ENCODE measurements at regions of chr1 and their contacts with region 1.

Region 1: GRCh38 chr1:212782422-212783154 is 9.0 kb downstream of the NSL1 start:
- DNase-seq: peak; percentile 7
- H3K4me3 ChIP-seq: no peak overlapping the region
- H3K27ac ChIP-seq: no peak overlapping the region
- H3K4me1 ChIP-seq: no peaks in the 10 kb centered on the region
- H3K27me3 ChIP-seq: no peaks in the 10 kb centered on the region
- CTCF ChIP-seq: peak; percentile 52 to 57

Region 2: GRCh38 chr1:212699104-212699624 is 83.4 kb before region 1 on chr1:
- CTCF ChIA-PET with region 1: no interaction called
- dilution Hi-C with region 1: no loop called
- in situ Hi-C with region 1: no loop called
- intact Hi-C with region 1: loop called (anchors 2 kb)
- DNase-seq: no peak
- H3K4me3 ChIP-seq: peak overlapping the region; percentile 33 to 53 (median 52)
- H3K27ac ChIP-seq: no peak overlapping the region
- H3K4me1 ChIP-seq: peaks cover 20% of the 10 kb centered on the region
- H3K27me3 ChIP-seq: peaks cover 28% of the 10 kb centered on the region
- CTCF ChIP-seq: peak in 1 of 2 donors; percentile 52

Region 3: DNA sequence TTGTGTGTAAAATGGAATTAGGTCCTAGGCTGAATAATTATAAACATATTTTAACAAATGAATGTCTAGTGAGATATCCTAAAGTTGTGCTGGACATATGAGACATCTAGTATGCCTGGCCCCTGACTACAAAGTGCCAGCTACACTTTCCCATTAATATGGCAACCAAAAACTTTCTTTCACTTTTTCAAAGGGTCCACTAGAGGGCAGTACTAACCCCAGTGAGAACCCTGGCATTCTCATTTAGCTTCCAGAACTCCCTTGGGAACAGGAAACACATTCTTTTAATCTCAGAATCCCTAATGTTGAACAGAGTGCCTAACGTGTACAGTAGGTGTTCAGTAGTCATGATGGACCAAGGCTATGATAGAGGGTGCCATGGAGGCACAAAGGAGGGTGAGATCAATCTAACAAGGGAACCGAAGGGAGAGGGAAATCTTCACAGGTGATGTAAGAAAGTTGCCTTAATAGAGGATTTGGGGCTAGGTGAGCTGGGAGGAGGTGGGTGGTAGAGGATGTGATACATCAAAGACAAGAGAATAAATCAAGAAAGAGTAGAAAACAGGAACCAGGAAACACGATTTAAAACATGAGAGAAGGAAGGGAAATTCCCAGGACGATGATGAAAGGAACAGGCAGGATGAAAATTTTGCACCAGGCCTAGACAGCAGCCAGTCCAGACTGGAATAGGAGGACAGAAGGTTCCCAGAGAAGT is 32.6 kb before region 1 on chr1:
- CTCF ChIA-PET with region 1: no interaction called
- dilution Hi-C with region 1: no loop called
- in situ Hi-C with region 1: no loop called
- intact Hi-C with region 1: loop called (anchors 1 kb)
- DNase-seq: peak; percentile 59
- H3K4me3 ChIP-seq: no peak overlapping the region
- H3K27ac ChIP-seq: no peak overlapping the region
- H3K4me1 ChIP-seq: peaks cover 3% of the 10 kb centered on the region
- H3K27me3 ChIP-seq: no peaks in the 10 kb centered on the region
- CTCF ChIP-seq: peak; percentile 74 to 80

Region 4: GRCh38 chr1:213017447-213018273 is 235.1 kb after region 1 on chr1:
- CTCF ChIA-PET with region 1: no interaction called
- dilution Hi-C with region 1: no loop called
- in situ Hi-C with region 1: no loop called
- intact Hi-C with region 1: no loop called
- DNase-seq: no peak
- H3K4me3 ChIP-seq: no peak overlapping the region
- H3K27ac ChIP-seq: no peak overlapping the region
- H3K4me1 ChIP-seq: peaks cover 10% of the 10 kb centered on the region
- H3K27me3 ChIP-seq: no peaks in the 10 kb centered on the region
- CTCF ChIP-seq: no peak

Region 5: GRCh38 chr1:213231795-213232231 is 449.2 kb after region 1 on chr1:
- CTCF ChIA-PET with region 1: no interaction called
- dilution Hi-C with region 1: no loop called
- in situ Hi-C with region 1: no loop called
- intact Hi-C with region 1: no loop called
- DNase-seq: no peak
- H3K4me3 ChIP-seq: no peak overlapping the region
- H3K27ac ChIP-seq: no peak overlapping the region
- H3K4me1 ChIP-seq: no peaks in the 10 kb centered on the region
- H3K27me3 ChIP-seq: no peaks in the 10 kb centered on the region
- CTCF ChIP-seq: no peak